MCF 10A (cell line): ENCODE measurements at regions of chr17 and their contacts with region 1.

Region 1: DNA sequence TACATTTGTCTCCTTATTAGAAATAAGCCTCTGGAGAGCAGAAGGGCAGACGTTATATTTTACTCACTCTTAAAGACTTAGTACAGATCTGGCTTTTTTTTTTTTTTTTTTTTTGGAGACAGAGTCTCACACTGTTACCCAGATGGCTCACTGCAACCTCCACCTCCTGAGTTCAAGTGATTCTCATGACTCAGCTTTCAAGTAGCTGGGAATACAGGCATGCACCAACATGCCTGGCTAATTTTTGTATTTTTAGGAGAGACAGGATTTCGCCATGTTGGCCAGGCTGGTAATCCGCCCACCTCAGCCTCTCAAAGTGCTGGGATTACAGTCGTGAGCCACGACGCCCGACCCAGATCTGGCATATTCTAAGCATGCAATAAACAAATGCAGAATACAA is 36.4 kb upstream of the TMEM97 start:
- DNase-seq: peak; percentile 92
- H3K4me3 Mint-ChIP-seq: peak overlapping the region; percentile 17
- H3K27ac Mint-ChIP-seq: peak overlapping the region; percentile 90
- H3K4me1 Mint-ChIP-seq: peaks cover 28% of the 10 kb centered on the region
- H3K27me3 Mint-ChIP-seq: no peaks in the 10 kb centered on the region
- CTCF ChIP-seq: no peak

Region 2: GRCh38 chr17:28261184-28261583 is 21.4 kb before region 1 on chr17:
- CTCF ChIA-PET with region 1: interaction called, 3 read pairs
- POLR2A ChIA-PET with region 1: interaction called, 7 read pairs
- intact Hi-C with region 1: loop called (anchors 2 kb)
- DNase-seq: no peak
- H3K4me3 Mint-ChIP-seq: no peak overlapping the region
- H3K27ac Mint-ChIP-seq: no peak overlapping the region
- H3K4me1 Mint-ChIP-seq: no peaks in the 10 kb centered on the region
- H3K27me3 Mint-ChIP-seq: peaks cover 10% of the 10 kb centered on the region
- CTCF ChIP-seq: no peak